B cell (primary cell): ENCODE measurements at regions of chr3 and their contacts with region 1.

Region 1: DNA sequence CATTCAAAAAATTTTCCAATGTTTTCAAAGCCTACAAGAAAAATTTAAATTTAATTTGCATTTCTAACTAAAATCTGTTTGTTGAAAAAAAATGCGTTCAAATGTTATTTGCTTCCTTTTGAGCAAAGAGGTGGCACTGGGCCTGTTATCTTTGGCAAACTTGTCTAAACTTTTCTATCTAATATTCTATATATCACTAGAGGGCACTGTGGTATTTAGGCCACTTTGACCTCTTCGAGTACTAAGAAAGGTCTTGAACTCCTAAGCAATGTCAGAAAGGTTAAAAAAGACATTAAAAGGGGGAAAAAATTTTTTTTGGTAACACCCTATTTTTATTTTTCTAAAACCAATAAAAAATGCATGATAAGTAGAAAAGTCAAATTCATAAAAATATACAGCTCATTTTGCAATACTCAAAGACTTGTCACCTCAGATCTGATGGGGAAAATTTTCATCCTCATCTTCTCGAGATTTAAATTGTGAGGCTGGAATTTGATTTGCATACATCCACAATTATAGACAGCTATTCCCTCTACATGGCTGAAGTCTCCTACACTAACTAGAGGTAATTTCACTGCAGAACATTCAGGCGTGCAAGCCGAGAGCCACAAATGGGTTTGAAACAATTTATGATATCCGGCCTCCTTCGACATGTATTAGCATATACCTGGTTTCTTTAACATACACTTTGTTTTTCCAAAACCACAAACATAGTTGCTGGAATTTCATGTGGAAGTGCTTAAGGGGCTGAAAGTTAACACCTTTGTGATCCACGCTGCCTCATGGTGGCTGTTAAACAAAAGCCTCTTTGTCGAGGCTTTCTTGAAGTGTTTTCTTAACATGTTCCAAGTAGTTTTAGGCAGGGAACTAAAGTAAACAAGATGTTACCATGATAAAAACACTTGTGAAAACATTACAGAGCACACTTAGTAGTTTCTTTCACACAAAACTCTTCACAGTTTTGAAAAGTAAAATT is 576.4 kb downstream of the FOXP1 start:
- DNase-seq: peak; percentile 69
- ATAC-seq: no peak
- H3K4me3 ChIP-seq: no peak overlapping the region
- H3K4me3 Mint-ChIP-seq: no peak overlapping the region
- H3K27ac ChIP-seq: peak overlapping the region in 1 of 2 donors; percentile 98
- H3K27ac Mint-ChIP-seq: peak overlapping the region; percentile 87
- H3K4me1 ChIP-seq: peaks cover 47 to 54% of the 10 kb centered on the region in 2 donors
- H3K4me1 Mint-ChIP-seq: peaks cover 64% of the 10 kb centered on the region
- H3K27me3 ChIP-seq: no peaks in the 10 kb centered on the region
- H3K27me3 Mint-ChIP-seq: no peaks in the 10 kb centered on the region
- CTCF ChIP-seq: peak; percentile 77

Region 2: GRCh38 chr3:71022551-71023335 is 15.6 kb after region 1 on chr3:
- CTCF ChIA-PET with region 1: interaction called, 11 read pairs
- POLR2A ChIA-PET with region 1: no interaction called
- intact Hi-C with region 1: no loop called
- DNase-seq: no peak
- ATAC-seq: no peak
- H3K4me3 ChIP-seq: no peak overlapping the region
- H3K4me3 Mint-ChIP-seq: no peak overlapping the region
- H3K27ac ChIP-seq: peak overlapping the region in 1 of 2 donors; percentile 28
- H3K27ac Mint-ChIP-seq: peak overlapping the region; percentile 33
- H3K4me1 ChIP-seq: peaks cover 22% of the 10 kb centered on the region in 2 donors
- H3K4me1 Mint-ChIP-seq: peaks cover 66% of the 10 kb centered on the region
- H3K27me3 ChIP-seq: no peaks in the 10 kb centered on the region
- H3K27me3 Mint-ChIP-seq: no peaks in the 10 kb centered on the region
- CTCF ChIP-seq: no peak

Region 3: GRCh38 chr3:71045917-71046282 is 38.8 kb after region 1 on chr3:
- CTCF ChIA-PET with region 1: interaction called, 5 read pairs
- POLR2A ChIA-PET with region 1: no interaction called
- intact Hi-C with region 1: loop called (anchors 1 kb)
- DNase-seq: no peak
- ATAC-seq: peak; percentile 54
- H3K4me3 ChIP-seq: peak overlapping the region in 2 of 5 experiments; percentile 15 to 25
- H3K4me3 Mint-ChIP-seq: peak overlapping the region; percentile 66
- H3K27ac ChIP-seq: peak overlapping the region; percentile 84 to 89
- H3K27ac Mint-ChIP-seq: peak overlapping the region; percentile 84
- H3K4me1 ChIP-seq: peaks cover 64 to 69% of the 10 kb centered on the region in 2 donors
- H3K4me1 Mint-ChIP-seq: peaks cover 82% of the 10 kb centered on the region
- H3K27me3 ChIP-seq: no peaks in the 10 kb centered on the region
- H3K27me3 Mint-ChIP-seq: no peaks in the 10 kb centered on the region
- CTCF ChIP-seq: no peak

Region 4: GRCh38 chr3:71130471-71131374 is 123.6 kb after region 1 on chr3:
- CTCF ChIA-PET with region 1: interaction called, 4 read pairs
- POLR2A ChIA-PET with region 1: no interaction called
- intact Hi-C with region 1: loop called (anchors 2 kb)
- DNase-seq: peak; percentile 81
- ATAC-seq: peak; percentile 76
- H3K4me3 ChIP-seq: peak overlapping the region; percentile 53 to 91 (median 71)
- H3K4me3 Mint-ChIP-seq: peak overlapping the region; percentile 93
- H3K27ac ChIP-seq: peak overlapping the region; percentile 72 to 91
- H3K27ac Mint-ChIP-seq: peak overlapping the region; percentile 94
- H3K4me1 ChIP-seq: peaks cover 51 to 64% of the 10 kb centered on the region in 2 donors
- H3K4me1 Mint-ChIP-seq: peaks cover 68% of the 10 kb centered on the region
- H3K27me3 ChIP-seq: no peaks in the 10 kb centered on the region
- H3K27me3 Mint-ChIP-seq: no peaks in the 10 kb centered on the region
- CTCF ChIP-seq: no peak

Region 5: GRCh38 chr3:71305231-71306206 is 298.4 kb after region 1 on chr3:
- CTCF ChIA-PET with region 1: interaction called, 4 read pairs
- POLR2A ChIA-PET with region 1: no interaction called
- intact Hi-C with region 1: loop called (anchors 5 kb)
- DNase-seq: peak; percentile 49
- ATAC-seq: peak; percentile 60
- H3K4me3 ChIP-seq: peak overlapping the region; percentile 50 to 85 (median 67)
- H3K4me3 Mint-ChIP-seq: peak overlapping the region; percentile 88
- H3K27ac ChIP-seq: peak overlapping the region; percentile 70 to 84
- H3K27ac Mint-ChIP-seq: peak overlapping the region; percentile 94
- H3K4me1 ChIP-seq: peaks cover 47 to 57% of the 10 kb centered on the region in 2 donors
- H3K4me1 Mint-ChIP-seq: peaks cover 77% of the 10 kb centered on the region
- H3K27me3 ChIP-seq: no peaks in the 10 kb centered on the region
- H3K27me3 Mint-ChIP-seq: no peaks in the 10 kb centered on the region
- CTCF ChIP-seq: no peak

Region 6: DNA sequence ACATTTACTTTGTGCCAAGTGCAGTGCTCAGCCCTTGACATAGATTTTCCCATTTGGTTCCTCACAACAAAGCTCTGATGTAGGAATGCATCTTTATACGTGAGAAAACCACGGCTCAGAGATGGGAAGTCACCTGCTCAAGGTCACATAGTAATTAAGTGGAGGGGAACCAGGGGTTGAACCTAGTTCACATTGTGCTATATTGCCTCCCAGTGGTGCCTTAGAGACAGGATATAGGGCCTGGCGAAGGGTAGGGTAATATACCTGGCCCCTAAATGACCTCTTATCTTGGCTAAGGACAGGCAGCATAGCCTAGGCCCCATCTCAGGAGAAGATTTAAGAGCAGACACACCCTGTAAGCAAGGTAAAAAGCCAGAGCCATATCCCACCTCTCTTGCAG is 504.9 kb after region 1 on chr3:
- CTCF ChIA-PET with region 1: interaction called, 26 read pairs
- POLR2A ChIA-PET with region 1: no interaction called
- intact Hi-C with region 1: loop called (anchors 1 kb)
- DNase-seq: peak; percentile 76
- ATAC-seq: peak; percentile 95
- H3K4me3 ChIP-seq: peak overlapping the region in 1 of 5 experiments; percentile 10
- H3K4me3 Mint-ChIP-seq: peak overlapping the region; percentile 66
- H3K27ac ChIP-seq: peak overlapping the region; percentile 17 to 74
- H3K27ac Mint-ChIP-seq: no peak overlapping the region
- H3K4me1 ChIP-seq: peaks cover 21 to 28% of the 10 kb centered on the region in 2 donors
- H3K4me1 Mint-ChIP-seq: peaks cover 29% of the 10 kb centered on the region
- H3K27me3 ChIP-seq: no peaks in the 10 kb centered on the region
- H3K27me3 Mint-ChIP-seq: no peaks in the 10 kb centered on the region
- CTCF ChIP-seq: peak; percentile 65